CD4-positive, alpha-beta memory T cell (primary cell): ENCODE measurements at regions of chr15 and their contacts with region 1.

Region 1: GRCh38 chr15:99704444-99704838 is 28.8 kb downstream of the LYSMD4 start:
- DNase-seq: peak; percentile 61 to 72 (median 70)
- H3K4me3 ChIP-seq: no peak overlapping the region
- H3K4me3 Mint-ChIP-seq: no peak overlapping the region
- H3K27ac ChIP-seq: no peak overlapping the region
- H3K27ac Mint-ChIP-seq: peak overlapping the region in 2 of 7 donors; percentile 8 to 71
- H3K4me1 ChIP-seq: peaks cover 18% of the 10 kb centered on the region
- H3K4me1 Mint-ChIP-seq: peaks cover 23 to 37% (median 31%) of the 10 kb centered on the region in 4 donors
- H3K27me3 ChIP-seq: no peaks in the 10 kb centered on the region
- H3K27me3 Mint-ChIP-seq: no peaks in the 10 kb centered on the region

Region 2: DNA sequence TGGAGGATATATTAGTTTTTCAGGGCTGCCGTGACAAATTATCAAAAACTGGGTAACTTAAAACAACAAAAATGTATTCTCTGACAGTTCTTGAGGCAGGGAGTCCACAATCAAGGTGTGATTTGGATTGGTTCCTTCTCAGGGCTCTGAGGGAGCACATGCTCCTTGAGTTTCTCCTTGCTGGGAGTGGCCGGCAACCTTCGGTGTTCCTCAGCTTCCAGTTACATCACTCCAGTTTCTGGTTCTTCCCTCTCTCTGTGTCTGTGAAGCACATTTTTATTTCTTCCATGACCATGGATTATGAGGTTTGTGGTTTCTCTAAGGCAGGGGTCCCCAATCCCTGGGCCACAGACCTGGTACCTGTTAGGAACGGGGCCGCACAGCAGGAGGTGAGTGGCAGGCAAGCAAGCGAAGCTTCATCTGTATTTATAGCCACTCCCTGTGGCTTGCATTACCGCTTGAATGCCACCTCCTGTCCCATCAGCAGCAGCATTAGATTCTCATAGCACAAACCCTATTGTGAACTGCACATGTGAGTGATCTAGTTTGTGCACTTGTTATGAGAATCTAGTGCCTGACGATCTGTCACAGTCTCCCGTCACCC is 428.8 kb before region 1 on chr15:
- CTCF ChIA-PET with region 1: interaction called, 153 read pairs
- POLR2A ChIA-PET with region 1: interaction called, 7 read pairs
- intact Hi-C with region 1: loop called (anchors 1 kb)
- DNase-seq: no peak
- H3K4me3 ChIP-seq: no peak overlapping the region
- H3K4me3 Mint-ChIP-seq: no peak overlapping the region
- H3K27ac ChIP-seq: no peak overlapping the region
- H3K27ac Mint-ChIP-seq: no peak overlapping the region
- H3K4me1 ChIP-seq: no peaks in the 10 kb centered on the region
- H3K4me1 Mint-ChIP-seq: peaks cover 7 to 14% (median 13%) of the 10 kb centered on the region in 4 donors
- H3K27me3 ChIP-seq: no peaks in the 10 kb centered on the region
- H3K27me3 Mint-ChIP-seq: no peaks in the 10 kb centered on the region

Region 3: DNA sequence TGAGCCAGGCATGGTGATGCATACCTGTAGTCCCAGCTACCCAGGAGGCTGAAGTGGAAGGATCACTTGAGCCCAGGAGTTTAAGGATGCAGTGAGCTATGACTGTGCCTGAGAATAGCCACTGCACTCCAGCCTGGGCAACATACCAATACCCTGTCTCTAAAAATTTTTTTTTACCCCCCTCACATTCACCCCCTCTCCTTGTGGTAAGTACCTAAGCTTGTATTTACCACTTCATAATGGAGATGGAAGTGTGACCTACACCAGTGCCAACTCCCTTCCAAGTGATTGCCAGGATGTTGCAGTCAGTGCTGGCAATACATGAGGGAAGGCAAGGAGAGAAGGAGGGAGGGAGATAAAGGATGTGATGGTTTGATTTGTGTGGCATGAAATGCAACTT is 368.9 kb before region 1 on chr15:
- CTCF ChIA-PET with region 1: interaction called, 72 read pairs
- POLR2A ChIA-PET with region 1: no interaction called
- intact Hi-C with region 1: no loop called
- DNase-seq: no peak
- H3K4me3 ChIP-seq: no peak overlapping the region
- H3K4me3 Mint-ChIP-seq: no peak overlapping the region
- H3K27ac ChIP-seq: no peak overlapping the region
- H3K27ac Mint-ChIP-seq: no peak overlapping the region
- H3K4me1 ChIP-seq: no peaks in the 10 kb centered on the region
- H3K4me1 Mint-ChIP-seq: peaks cover 0 to 1% (median 0%) of the 10 kb centered on the region in 4 donors
- H3K27me3 ChIP-seq: no peaks in the 10 kb centered on the region
- H3K27me3 Mint-ChIP-seq: no peaks in the 10 kb centered on the region

Region 4: DNA sequence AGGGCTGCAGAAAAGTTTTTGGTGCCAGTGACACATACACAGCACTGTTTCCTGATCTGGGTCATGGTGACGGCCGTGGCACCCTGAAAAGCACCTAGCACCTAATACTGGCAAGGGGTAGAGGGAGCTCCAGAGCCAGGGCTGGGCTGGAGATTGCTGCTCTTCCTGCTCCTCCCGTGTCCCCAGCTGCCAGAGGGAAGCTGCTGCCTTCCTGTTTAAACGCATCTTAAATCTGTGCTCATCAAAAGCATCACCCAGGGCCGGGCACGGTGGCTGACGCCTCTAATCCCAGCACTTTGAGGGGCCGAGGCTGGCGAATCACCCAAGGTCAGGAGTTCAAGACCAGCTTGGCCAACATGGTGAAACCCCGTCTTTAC is 295.4 kb before region 1 on chr15:
- CTCF ChIA-PET with region 1: interaction called, 24 read pairs
- POLR2A ChIA-PET with region 1: no interaction called
- intact Hi-C with region 1: loop called (anchors 1 kb)
- DNase-seq: peak in 3 of 5 donors; percentile 7 to 26 (median 25)
- H3K4me3 ChIP-seq: no peak overlapping the region
- H3K4me3 Mint-ChIP-seq: no peak overlapping the region
- H3K27ac ChIP-seq: no peak overlapping the region
- H3K27ac Mint-ChIP-seq: no peak overlapping the region
- H3K4me1 ChIP-seq: peaks cover 8% of the 10 kb centered on the region
- H3K4me1 Mint-ChIP-seq: peaks cover 5 to 21% (median 6%) of the 10 kb centered on the region in 4 donors
- H3K27me3 ChIP-seq: no peaks in the 10 kb centered on the region
- H3K27me3 Mint-ChIP-seq: peaks cover 2 to 4% of the 10 kb centered on the region in 2 donors

Region 5: DNA sequence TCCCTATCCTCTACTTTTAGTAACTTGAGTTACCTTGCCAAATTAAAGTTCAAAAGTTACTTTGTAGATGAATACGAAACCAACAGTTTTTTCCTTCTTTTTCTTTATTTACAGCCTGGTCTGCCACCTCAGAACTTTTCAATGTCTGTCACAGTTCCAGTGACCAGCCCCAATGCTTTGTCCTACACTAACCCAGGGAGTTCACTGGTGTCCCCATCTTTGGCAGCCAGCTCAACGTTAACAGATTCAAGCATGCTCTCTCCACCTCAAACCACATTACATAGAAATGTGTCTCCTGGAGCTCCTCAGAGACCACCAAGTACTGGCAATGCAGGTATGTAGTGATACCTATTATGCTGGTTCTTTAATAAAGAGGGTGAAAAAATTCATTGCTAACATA is 30.2 kb before region 1 on chr15:
- CTCF ChIA-PET with region 1: interaction called, 11 read pairs
- POLR2A ChIA-PET with region 1: no interaction called
- intact Hi-C with region 1: no loop called
- DNase-seq: no peak
- H3K4me3 ChIP-seq: no peak overlapping the region
- H3K4me3 Mint-ChIP-seq: no peak overlapping the region
- H3K27ac ChIP-seq: no peak overlapping the region
- H3K27ac Mint-ChIP-seq: no peak overlapping the region
- H3K4me1 ChIP-seq: no peaks in the 10 kb centered on the region
- H3K4me1 Mint-ChIP-seq: no peaks in the 10 kb centered on the region
- H3K27me3 ChIP-seq: no peaks in the 10 kb centered on the region
- H3K27me3 Mint-ChIP-seq: no peaks in the 10 kb centered on the region

Region 6: GRCh38 chr15:99717161-99718009 is 12.9 kb after region 1 on chr15:
- CTCF ChIA-PET with region 1: interaction called, 45 read pairs
- POLR2A ChIA-PET with region 1: interaction called, 4 read pairs
- intact Hi-C with region 1: loop called (anchors 2 kb)
- DNase-seq: no peak
- H3K4me3 ChIP-seq: no peak overlapping the region
- H3K4me3 Mint-ChIP-seq: no peak overlapping the region
- H3K27ac ChIP-seq: no peak overlapping the region
- H3K27ac Mint-ChIP-seq: peak overlapping the region in 1 of 7 donors; percentile 24
- H3K4me1 ChIP-seq: peaks cover 23% of the 10 kb centered on the region
- H3K4me1 Mint-ChIP-seq: peaks cover 23 to 32% (median 29%) of the 10 kb centered on the region in 4 donors
- H3K27me3 ChIP-seq: no peaks in the 10 kb centered on the region
- H3K27me3 Mint-ChIP-seq: no peaks in the 10 kb centered on the region

Region 7: DNA sequence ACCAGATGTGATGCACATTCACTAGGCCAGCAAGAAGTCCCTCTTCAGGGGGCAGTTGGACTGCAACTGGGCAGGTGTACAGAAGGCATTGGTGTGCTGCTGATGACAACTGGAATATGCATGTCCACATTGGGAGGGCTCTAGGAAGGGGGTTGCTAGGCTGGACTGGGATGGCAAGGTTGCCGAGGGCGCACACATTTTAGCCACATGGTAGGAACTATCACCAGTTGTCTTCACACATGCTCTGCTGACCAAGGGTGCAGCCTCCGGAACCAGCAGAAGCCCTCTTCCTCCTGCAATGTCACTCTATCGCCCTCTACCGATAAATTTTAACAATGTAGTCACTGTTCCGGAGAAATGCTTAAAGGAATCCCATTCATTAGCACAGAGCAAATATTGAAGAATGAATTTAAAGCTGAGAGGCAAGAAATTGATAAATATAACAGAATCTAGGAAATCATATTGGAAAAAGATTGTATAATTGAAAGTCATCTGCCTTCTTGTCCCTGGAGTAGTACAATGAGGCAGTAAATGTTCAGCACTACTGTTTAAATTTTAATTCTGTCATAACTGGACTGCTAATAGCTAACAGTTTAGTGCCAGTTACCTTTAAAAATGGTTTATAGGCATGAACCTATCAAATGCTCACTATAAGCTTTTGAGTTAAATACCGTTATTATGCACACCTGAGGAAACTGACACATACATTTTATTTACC is 51.4 kb after region 1 on chr15:
- CTCF ChIA-PET with region 1: interaction called, 58 read pairs
- POLR2A ChIA-PET with region 1: no interaction called
- intact Hi-C with region 1: loop called (anchors 1 kb)
- DNase-seq: peak in 4 of 5 donors; percentile 56 to 67 (median 60)
- H3K4me3 ChIP-seq: no peak overlapping the region
- H3K4me3 Mint-ChIP-seq: no peak overlapping the region
- H3K27ac ChIP-seq: no peak overlapping the region
- H3K27ac Mint-ChIP-seq: no peak overlapping the region
- H3K4me1 ChIP-seq: no peaks in the 10 kb centered on the region
- H3K4me1 Mint-ChIP-seq: peaks cover 0 to 5% (median 1%) of the 10 kb centered on the region in 4 donors
- H3K27me3 ChIP-seq: no peaks in the 10 kb centered on the region
- H3K27me3 Mint-ChIP-seq: peaks cover 0 to 4% of the 10 kb centered on the region in 2 donors

Region 8: DNA sequence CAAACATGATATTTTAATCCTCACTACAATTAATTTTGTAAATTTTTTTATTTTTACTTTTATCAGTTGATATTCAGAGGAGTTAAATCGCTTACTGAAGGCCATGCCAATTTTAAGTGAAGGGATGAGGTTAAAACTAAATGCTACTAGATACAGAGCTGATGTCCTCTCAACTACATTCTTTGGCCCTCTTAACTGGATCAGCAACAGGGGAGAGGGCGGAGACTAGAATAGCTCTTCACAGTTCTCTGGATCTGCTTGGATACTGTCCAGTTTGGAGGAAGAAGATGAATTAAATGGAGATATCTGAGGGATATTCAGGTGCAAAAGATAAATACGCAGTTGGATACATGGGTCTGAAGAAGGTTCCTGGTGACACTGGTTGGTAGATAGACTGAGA is 114.4 kb after region 1 on chr15:
- CTCF ChIA-PET with region 1: no interaction called
- POLR2A ChIA-PET with region 1: no interaction called
- intact Hi-C with region 1: no loop called
- DNase-seq: no peak
- H3K4me3 ChIP-seq: no peak overlapping the region
- H3K4me3 Mint-ChIP-seq: no peak overlapping the region
- H3K27ac ChIP-seq: no peak overlapping the region
- H3K27ac Mint-ChIP-seq: no peak overlapping the region
- H3K4me1 ChIP-seq: no peaks in the 10 kb centered on the region
- H3K4me1 Mint-ChIP-seq: peaks cover 0 to 2% (median 0%) of the 10 kb centered on the region in 4 donors
- H3K27me3 ChIP-seq: no peaks in the 10 kb centered on the region
- H3K27me3 Mint-ChIP-seq: no peaks in the 10 kb centered on the region